ENCODE measurements at regions of chr1 and their contacts with region 1.

Region 1: GRCh38 chr1:191153689-191154088 is 676.0 kb upstream of the BRINP3 start:
- DNase-seq: no peak
- H3K4me3 Mint-ChIP-seq: no peak overlapping the region
- H3K27ac Mint-ChIP-seq: no peak overlapping the region
- H3K4me1 Mint-ChIP-seq: no peaks in the 10 kb centered on the region
- H3K27me3 Mint-ChIP-seq: no peaks in the 10 kb centered on the region
- CTCF ChIP-seq: no peak

Region 2: DNA sequence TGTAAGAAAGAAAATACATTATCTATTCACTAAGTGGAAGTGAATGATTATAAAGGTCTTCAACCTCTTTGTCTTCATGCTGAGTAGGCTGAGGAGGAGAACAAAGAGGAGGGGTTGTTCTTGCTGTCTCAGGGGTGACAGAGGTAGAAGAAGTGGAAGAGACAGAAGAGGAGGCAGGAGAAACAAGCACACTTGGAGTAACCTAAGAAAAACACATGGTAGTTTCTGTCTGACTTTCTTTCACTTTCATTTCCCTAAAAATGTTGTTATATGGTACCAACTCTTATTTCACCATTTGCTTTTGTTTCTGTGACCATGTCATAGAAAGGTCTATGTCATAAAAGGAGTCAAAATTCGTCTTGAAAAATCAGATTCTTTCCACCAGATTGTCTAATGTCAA is 20.6 kb after region 1 on chr1:
- CTCF ChIA-PET with region 1: no interaction called
- POLR2A ChIA-PET with region 1: interaction called, 3 read pairs
- intact Hi-C with region 1: loop called (anchors 2 kb)
- DNase-seq: peak; percentile 13
- H3K4me3 Mint-ChIP-seq: peak overlapping the region; percentile 38
- H3K27ac Mint-ChIP-seq: peak overlapping the region; percentile 96
- H3K4me1 Mint-ChIP-seq: peaks cover 23% of the 10 kb centered on the region
- H3K27me3 Mint-ChIP-seq: no peaks in the 10 kb centered on the region
- CTCF ChIP-seq: no peak